Mammary epithelial cell (primary cell): ENCODE measurements at regions of chrX and their contacts with region 1.

Region 1: DNA sequence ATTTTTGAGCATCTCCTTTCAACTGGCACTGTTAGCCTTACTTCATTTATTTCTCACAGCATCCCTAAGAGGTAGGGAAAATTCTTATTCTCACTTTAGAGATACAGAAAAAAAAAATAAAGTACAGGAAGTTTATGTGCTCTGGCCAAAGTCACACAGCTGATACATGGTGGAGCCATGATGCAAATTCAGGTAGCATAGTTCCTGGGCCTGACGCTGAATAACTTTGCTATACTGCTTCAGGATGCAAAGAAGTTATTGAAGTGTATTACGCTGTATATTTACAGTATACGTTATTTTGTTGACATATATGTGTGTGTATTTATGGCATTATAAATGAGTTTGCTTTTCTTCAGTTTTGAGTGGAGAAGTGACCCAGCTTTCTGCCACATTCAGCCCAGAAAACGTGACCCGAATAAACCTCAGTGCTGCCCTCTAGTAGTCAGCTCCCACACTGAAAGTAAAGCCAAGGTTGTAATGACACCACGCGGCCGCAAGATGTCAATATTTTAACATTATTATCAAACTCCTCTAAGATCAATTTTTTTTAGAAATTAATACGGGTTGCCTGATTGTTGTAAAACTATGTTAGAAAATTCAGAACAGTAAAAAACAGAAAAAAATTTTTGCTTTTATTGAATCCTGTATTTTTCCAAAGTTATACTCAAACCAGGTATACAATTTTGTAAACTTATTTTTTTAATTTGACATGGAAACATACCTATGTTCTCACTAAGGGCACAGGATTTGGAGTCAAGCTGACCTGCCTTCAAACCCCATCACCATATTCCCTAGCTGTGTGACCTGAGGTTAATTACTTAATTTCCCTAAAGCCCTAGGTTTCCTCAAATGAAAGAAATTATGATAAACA is 3.8 kb upstream of the GUCY2F start:
- DNase-seq: peak; percentile 55
- H3K4me3 ChIP-seq: no peak overlapping the region
- H3K27ac ChIP-seq: no peak overlapping the region
- H3K4me1 ChIP-seq: no peaks in the 10 kb centered on the region
- H3K27me3 ChIP-seq: peaks cover 11% of the 10 kb centered on the region
- CTCF ChIP-seq: peak; percentile 95 to 96

Region 2: GRCh38 chrX:109089359-109089758 is 396.3 kb before region 1 on chrX:
- CTCF ChIA-PET with region 1: no interaction called
- dilution Hi-C with region 1: no loop called
- in situ Hi-C with region 1: no loop called
- intact Hi-C with region 1: no loop called
- DNase-seq: no peak
- H3K4me3 ChIP-seq: no peak overlapping the region
- H3K27ac ChIP-seq: no peak overlapping the region
- H3K4me1 ChIP-seq: no peaks in the 10 kb centered on the region
- H3K27me3 ChIP-seq: peaks cover 4% of the 10 kb centered on the region
- CTCF ChIP-seq: no peak

Region 3: GRCh38 chrX:109600237-109600651 is 114.5 kb after region 1 on chrX:
- CTCF ChIA-PET with region 1: interaction called, 5 read pairs
- dilution Hi-C with region 1: no loop called
- in situ Hi-C with region 1: loop called in 1 of 2 experiments (anchors 25 kb)
- intact Hi-C with region 1: no loop called
- DNase-seq: no peak
- H3K4me3 ChIP-seq: no peak overlapping the region
- H3K27ac ChIP-seq: no peak overlapping the region
- H3K4me1 ChIP-seq: no peaks in the 10 kb centered on the region
- H3K27me3 ChIP-seq: peaks cover 13% of the 10 kb centered on the region
- CTCF ChIP-seq: no peak

Region 4: DNA sequence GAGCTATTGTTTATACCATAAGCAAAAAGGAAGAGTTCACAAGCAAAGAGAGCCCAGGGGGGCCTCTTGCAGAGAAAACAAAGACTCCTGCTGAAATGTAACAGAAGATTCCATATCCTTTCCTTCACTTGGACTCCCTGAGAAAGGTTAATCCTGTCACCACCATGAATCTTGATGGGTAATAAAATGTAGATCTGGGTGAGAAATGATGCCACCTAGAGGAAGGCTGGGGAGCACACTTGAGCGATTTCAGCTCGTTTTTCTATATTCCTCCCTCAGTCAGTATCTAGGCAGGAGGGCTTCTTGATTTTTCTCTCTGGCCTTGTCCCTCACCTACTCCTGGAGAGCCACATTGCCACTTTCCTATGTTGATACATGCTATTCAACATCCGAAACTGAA is 149.5 kb after region 1 on chrX:
- CTCF ChIA-PET with region 1: no interaction called
- dilution Hi-C with region 1: no loop called
- in situ Hi-C with region 1: loop called in 1 of 2 experiments (anchors 10 kb)
- intact Hi-C with region 1: loop called (anchors 1 kb)
- DNase-seq: peak; percentile 3
- H3K4me3 ChIP-seq: no peak overlapping the region
- H3K27ac ChIP-seq: no peak overlapping the region
- H3K4me1 ChIP-seq: no peaks in the 10 kb centered on the region
- H3K27me3 ChIP-seq: no peaks in the 10 kb centered on the region
- CTCF ChIP-seq: peak; percentile 55 to 63

Region 5: DNA sequence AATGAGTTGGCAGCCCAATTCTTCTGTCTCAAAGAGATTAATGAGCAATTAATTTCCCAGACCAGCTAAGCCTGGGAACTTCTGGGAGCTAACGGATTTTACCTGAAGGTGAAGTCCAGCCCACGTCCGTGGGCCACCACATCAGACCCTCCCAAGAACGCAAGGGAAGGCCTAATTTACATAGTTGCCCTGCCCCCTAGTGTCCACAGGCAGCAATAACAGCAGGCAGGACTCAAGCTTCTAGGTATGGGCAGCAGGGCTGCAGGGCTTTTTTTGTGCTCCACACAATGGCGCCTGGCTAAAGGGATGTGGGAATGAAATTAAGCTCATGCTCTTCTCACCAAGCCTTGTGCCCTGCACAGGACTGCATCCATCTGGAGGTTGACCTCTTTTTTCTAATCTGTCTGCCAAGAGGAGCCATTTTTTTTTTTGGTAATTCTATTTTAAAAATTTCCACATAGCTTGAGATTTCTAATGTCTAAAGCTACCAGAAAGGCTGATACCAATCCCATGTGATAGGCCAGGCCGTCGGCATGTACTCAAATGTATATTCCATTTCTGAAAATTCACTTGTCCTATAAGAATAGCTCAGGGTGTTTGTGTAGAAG is 405.3 kb after region 1 on chrX:
- CTCF ChIA-PET with region 1: interaction called, 4 read pairs
- dilution Hi-C with region 1: no loop called
- in situ Hi-C with region 1: loop called in 1 of 2 experiments (anchors 10 kb)
- intact Hi-C with region 1: loop called (anchors 1 kb)
- DNase-seq: peak; percentile 34
- H3K4me3 ChIP-seq: no peak overlapping the region
- H3K27ac ChIP-seq: no peak overlapping the region
- H3K4me1 ChIP-seq: no peaks in the 10 kb centered on the region
- H3K27me3 ChIP-seq: no peaks in the 10 kb centered on the region
- CTCF ChIP-seq: peak; percentile 96 to 97